A673 (cell line): ENCODE measurements at regions of chr3 and their contacts with region 1.

Region 1: GRCh38 chr3:36579746-36580145 is 184.6 kb downstream of the DCLK3 start:
- DNase-seq: no peak
- H3K4me3 ChIP-seq: no peak overlapping the region
- H3K27ac ChIP-seq: no peak overlapping the region
- H3K4me1 ChIP-seq: no peaks in the 10 kb centered on the region
- H3K27me3 ChIP-seq: no peaks in the 10 kb centered on the region
- CTCF ChIP-seq: no peak

Region 2: GRCh38 chr3:36514171-36514570 is 65.6 kb before region 1 on chr3:
- CTCF ChIA-PET with region 1: no interaction called
- POLR2A ChIA-PET with region 1: interaction called, 18 read pairs
- intact Hi-C with region 1: no loop called
- DNase-seq: no peak
- H3K4me3 ChIP-seq: no peak overlapping the region
- H3K27ac ChIP-seq: no peak overlapping the region
- H3K4me1 ChIP-seq: no peaks in the 10 kb centered on the region
- H3K27me3 ChIP-seq: no peaks in the 10 kb centered on the region
- CTCF ChIP-seq: no peak